Activated B cell treated with CpG ODN at 0.5 μM for 24 hours (primary cell): ENCODE measurements at regions of chr17 and their contacts with region 1.

Region 1: DNA sequence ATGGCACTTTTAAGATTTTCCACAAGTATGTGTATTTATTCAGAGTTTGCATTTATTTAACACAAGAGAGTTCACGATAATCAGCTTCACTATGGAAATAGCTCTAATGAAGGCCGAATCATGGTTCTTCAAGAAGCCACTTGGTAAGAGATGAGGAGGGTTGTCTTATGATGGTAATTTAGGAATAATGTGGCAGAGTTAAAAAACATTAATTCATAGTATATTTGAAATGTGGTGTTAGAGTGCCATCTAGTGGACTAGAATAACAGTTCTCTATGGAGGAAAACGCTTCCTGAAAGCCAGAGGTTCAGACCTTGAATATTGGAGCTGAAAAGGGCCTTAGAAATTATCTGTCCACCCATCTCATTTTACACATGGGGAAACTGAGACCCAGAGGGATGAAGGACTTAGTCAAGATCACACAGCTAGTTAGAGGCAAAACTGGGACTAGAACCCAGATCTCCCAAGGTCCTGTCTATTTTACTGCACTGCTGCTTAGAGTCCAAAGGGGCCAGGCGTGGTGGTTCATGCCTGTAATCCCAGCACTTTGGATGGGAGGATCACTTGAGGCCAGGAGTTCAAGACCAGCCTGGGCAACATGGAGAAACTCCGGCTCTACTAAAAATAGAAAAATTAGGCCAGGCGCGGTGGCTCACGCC is 33.8 kb upstream of the KPNB1 start:
- DNase-seq: no peak
- ATAC-seq: peak; percentile 47
- H3K4me3 Mint-ChIP-seq: no peak overlapping the region
- H3K27ac Mint-ChIP-seq: no peak overlapping the region
- H3K4me1 Mint-ChIP-seq: no peaks in the 10 kb centered on the region
- H3K27me3 Mint-ChIP-seq: no peaks in the 10 kb centered on the region
- CTCF ChIP-seq: peak; percentile 60

Region 2: DNA sequence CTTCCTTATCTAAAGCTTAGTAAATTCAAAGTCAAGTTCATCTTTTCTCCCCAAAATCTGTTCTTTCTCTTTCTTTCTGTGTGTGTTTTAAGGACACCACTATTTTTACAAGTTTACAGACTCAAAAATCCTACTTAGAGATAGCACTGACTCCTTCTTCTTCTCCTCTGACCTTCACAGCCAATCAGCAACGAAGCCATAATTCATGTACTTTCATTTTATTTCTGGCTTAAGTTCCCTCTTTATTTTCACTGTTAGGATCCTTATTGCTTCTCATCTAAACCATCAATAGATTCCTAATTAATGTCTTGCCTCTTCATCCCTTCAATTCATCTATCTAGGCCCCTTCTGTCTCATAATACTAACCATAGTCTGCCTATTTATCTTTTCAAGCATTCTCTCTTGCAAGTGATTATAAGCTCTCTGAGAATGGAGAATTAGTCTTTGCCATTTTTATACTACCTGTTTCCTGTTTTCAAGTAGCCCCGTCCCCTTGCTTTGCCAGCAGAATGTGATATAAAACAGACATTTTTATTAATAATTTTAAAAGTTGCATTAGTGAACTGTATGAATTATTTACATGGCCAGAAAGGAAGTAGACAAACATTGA is 453.8 kb before region 1 on chr17:
- CTCF ChIA-PET with region 1: interaction called, 3 read pairs
- POLR2A ChIA-PET with region 1: interaction called, 6 read pairs
- intact Hi-C with region 1: loop called (anchors 10 kb)
- DNase-seq: no peak
- ATAC-seq: no peak
- H3K4me3 Mint-ChIP-seq: peak overlapping the region; percentile 67
- H3K27ac Mint-ChIP-seq: peak overlapping the region; percentile 92
- H3K4me1 Mint-ChIP-seq: peaks cover 32% of the 10 kb centered on the region
- H3K27me3 Mint-ChIP-seq: no peaks in the 10 kb centered on the region
- CTCF ChIP-seq: no peak

Region 3: DNA sequence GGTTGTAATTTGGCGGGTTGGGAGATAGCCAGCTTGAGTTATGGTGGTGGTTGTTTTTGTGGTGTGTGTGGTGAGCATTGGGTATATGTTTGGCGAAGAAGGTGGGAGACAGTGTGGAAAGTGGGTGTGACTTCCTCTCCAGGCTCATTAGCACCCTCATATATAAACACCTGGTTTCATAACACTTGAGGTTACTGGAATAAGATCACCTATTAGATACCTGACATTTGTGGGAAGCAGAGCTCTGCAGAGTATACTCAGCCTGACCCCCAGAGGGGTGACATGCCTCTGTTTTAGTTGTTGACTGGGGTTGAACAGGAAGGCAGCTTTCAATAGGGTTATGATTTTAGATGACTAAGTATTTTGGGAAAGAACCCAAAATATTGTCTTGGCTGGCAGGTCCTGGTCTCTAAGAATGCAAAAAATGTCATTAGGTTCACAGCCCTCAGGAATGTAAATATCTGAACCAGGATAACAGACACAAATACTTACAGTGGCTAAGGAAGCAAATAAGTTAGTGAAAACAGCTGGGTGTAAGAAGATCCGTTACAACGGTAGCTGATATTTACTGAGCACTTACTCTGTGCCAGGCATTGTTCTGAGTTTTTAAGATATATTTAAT is 310.5 kb before region 1 on chr17:
- CTCF ChIA-PET with region 1: no interaction called
- POLR2A ChIA-PET with region 1: no interaction called
- intact Hi-C with region 1: no loop called
- DNase-seq: no peak
- ATAC-seq: no peak
- H3K4me3 Mint-ChIP-seq: no peak overlapping the region
- H3K27ac Mint-ChIP-seq: no peak overlapping the region
- H3K4me1 Mint-ChIP-seq: peaks cover 11% of the 10 kb centered on the region
- H3K27me3 Mint-ChIP-seq: no peaks in the 10 kb centered on the region
- CTCF ChIP-seq: no peak